ENCODE measurements at regions of chr4 and their contacts with region 1.

Region 1: DNA sequence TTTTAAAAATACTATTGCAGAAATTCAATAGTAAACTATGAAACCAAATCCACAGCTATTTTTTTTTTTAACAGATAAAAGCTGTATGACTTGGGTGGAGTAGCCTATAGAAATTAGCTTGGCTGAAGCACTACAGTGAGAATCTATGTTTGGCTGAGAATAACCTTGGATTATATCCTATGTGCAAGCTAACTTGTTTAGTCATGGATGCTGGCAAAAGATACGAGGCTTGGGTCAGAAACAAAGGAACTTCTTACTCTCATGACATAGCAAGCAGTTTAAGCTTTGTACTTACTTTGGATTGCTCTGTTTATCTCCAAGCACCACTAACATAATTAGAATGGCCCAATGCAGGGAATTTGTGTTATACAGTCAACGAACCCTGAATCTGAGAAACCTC is 119.2 kb upstream of the GRID2 start:
- DNase-seq: no peak
- ATAC-seq: no peak
- H3K4me3 ChIP-seq: no peak overlapping the region
- H3K27ac ChIP-seq: no peak overlapping the region
- H3K4me1 ChIP-seq: no peaks in the 10 kb centered on the region
- H3K27me3 ChIP-seq: no peaks in the 10 kb centered on the region
- CTCF ChIP-seq: no peak
- EP300 ChIP-seq: no peak
- POLR2A ChIP-seq: no peak
- RAD21 ChIP-seq: no peak

Region 2: GRCh38 chr4:91127831-91128230 is 1056.7 kb before region 1 on chr4:
- CTCF ChIA-PET with region 1: no interaction called
- POLR2A ChIA-PET with region 1: no interaction called
- in situ Hi-C with region 1: no loop called
- intact Hi-C with region 1: loop called (anchors 5 kb)
- DNase-seq: no peak
- ATAC-seq: no peak
- H3K4me3 ChIP-seq: no peak overlapping the region
- H3K27ac ChIP-seq: no peak overlapping the region
- H3K4me1 ChIP-seq: no peaks in the 10 kb centered on the region
- H3K27me3 ChIP-seq: no peaks in the 10 kb centered on the region
- CTCF ChIP-seq: no peak
- EP300 ChIP-seq: no peak
- POLR2A ChIP-seq: no peak
- RAD21 ChIP-seq: no peak

Region 3: GRCh38 chr4:92101737-92102172 is 82.8 kb before region 1 on chr4:
- CTCF ChIA-PET with region 1: no interaction called
- POLR2A ChIA-PET with region 1: no interaction called
- in situ Hi-C with region 1: no loop called
- intact Hi-C with region 1: no loop called
- DNase-seq: no peak
- ATAC-seq: no peak
- H3K4me3 ChIP-seq: no peak overlapping the region
- H3K27ac ChIP-seq: no peak overlapping the region
- H3K4me1 ChIP-seq: no peaks in the 10 kb centered on the region
- H3K27me3 ChIP-seq: no peaks in the 10 kb centered on the region
- CTCF ChIP-seq: no peak
- EP300 ChIP-seq: no peak
- POLR2A ChIP-seq: no peak
- RAD21 ChIP-seq: no peak

Region 4: DNA sequence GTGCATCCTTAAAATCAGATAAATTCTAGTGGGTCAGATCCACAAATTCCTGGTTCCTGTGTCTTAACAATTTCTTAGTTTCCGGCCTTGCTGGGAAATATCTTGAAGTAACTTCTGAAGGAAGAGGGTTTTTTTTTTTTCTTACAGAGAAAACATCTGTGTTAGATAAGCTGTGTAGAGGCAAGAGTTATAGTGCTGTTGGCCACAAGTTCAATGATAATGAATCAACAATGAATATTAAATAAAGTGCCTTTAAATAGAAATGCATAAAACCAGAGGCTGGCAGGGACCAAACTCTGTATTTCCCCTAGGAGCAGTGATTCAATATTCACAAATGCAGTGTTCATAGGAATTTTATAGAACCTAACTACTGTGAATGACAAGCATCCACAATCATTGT is 932.1 kb after region 1 on chr4:
- CTCF ChIA-PET with region 1: no interaction called
- POLR2A ChIA-PET with region 1: no interaction called
- in situ Hi-C with region 1: no loop called
- intact Hi-C with region 1: no loop called
- DNase-seq: no peak
- ATAC-seq: no peak
- H3K4me3 ChIP-seq: no peak overlapping the region
- H3K27ac ChIP-seq: no peak overlapping the region
- H3K4me1 ChIP-seq: no peaks in the 10 kb centered on the region
- H3K27me3 ChIP-seq: no peaks in the 10 kb centered on the region
- CTCF ChIP-seq: no peak
- EP300 ChIP-seq: no peak
- POLR2A ChIP-seq: no peak
- RAD21 ChIP-seq: no peak

Measured in HepG2 (cell line).